Activated T-helper 1 cell treated with anti-CD3 and anti-CD28 coated beads, Interleukin-12 subunit alpha, Interleukin-12 subunit beta, Interleukin-2, Interleukin-4 antibody, amounts not matched to agents 30 ng/mL and 10 ng/mL and 1 ng/mL, durations not matched to agents 14 hours and 24 hours and 36 hours (primary cell): ENCODE measurements at regions of chr4 and their contacts with region 1.

Region 1: DNA sequence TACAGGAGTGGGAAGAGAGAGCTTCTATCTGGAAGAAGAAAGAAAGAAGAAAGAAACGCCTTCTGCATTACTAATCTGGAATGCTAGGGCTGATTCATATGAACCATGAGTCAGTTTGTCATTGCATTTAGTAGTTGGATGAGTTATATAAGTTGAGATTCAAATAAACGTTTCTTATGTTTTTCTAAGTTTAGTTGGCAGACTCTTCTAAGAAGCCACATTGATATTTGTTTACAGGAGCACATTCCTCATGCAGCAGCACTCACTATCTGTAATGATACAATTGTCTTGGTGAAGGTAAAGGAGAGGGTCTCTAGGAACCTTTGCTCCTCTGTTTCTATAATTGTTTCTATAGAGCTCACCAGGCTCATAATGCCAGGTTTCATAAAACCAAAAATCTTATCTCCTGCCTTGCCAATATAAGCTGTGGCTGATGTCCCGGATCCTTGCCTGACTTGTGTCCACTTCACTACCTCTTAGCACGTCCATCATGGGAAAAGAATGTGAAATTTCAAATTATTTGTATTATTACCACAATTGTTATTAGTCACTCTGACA is 39.5 kb downstream of the HOPX start:
- DNase-seq: no peak
- H3K4me3 Mint-ChIP-seq: no peak overlapping the region
- H3K27ac Mint-ChIP-seq: peak overlapping the region; percentile 82
- H3K4me1 Mint-ChIP-seq: peaks cover 40% of the 10 kb centered on the region
- H3K27me3 Mint-ChIP-seq: peaks cover 3% of the 10 kb centered on the region

Region 2: DNA sequence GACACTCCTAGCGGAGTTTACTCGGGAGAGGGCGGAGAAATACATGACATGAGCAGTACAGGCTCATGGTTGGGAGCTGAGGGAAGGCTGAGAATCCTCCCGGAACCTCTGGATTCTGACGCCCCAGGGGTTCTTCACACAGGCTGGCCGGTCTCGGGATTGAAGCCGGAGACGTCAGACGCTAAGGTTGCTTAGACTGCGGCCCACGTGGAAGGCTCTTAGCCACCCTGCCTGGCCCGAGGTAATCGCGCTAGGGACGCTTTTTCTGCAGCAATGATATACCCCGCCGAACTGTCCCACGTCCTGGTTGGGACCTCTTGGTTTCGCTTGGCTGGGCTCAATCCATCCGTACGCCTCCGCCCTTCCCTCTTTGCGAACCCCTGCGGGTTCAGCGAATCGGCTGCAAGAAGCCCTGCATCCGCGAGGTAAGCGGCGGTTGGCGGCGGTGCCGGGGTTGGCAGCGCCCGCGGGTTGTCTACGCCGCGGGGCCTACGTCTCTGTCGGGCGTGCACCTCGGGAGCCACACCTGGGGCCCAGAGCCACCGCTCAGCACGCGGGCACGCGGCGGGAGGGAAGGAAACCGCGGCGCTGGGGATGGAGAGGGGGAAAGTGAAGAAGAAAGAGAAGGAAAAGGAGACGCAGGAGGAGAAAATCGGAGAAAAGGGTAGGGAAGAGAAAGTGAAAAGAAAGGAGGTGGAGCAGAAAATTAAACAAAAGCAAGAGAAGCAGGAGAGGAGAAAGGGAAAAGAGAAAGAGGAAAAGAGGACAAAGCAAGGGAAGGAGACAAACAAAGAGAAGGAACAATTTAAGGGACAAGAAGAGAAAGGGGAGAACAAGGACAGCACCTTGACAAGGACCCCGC is 136.1 kb before region 1 on chr4 and contains the start of gene ARL9:
- intact Hi-C with region 1: no loop called
- DNase-seq: peak; percentile 38
- H3K4me3 Mint-ChIP-seq: peak within 1 kb of the TSS; percentile 88
- H3K27ac Mint-ChIP-seq: peak within 1 kb of the TSS; percentile 76
- H3K4me1 Mint-ChIP-seq: peaks cover 20% of the 10 kb centered on the region
- H3K27me3 Mint-ChIP-seq: peaks cover 13% of the 10 kb centered on the region
- total RNA-seq, gene ARL9: 0.13 and 0.32 TPM in 2 replicates

Region 3: DNA sequence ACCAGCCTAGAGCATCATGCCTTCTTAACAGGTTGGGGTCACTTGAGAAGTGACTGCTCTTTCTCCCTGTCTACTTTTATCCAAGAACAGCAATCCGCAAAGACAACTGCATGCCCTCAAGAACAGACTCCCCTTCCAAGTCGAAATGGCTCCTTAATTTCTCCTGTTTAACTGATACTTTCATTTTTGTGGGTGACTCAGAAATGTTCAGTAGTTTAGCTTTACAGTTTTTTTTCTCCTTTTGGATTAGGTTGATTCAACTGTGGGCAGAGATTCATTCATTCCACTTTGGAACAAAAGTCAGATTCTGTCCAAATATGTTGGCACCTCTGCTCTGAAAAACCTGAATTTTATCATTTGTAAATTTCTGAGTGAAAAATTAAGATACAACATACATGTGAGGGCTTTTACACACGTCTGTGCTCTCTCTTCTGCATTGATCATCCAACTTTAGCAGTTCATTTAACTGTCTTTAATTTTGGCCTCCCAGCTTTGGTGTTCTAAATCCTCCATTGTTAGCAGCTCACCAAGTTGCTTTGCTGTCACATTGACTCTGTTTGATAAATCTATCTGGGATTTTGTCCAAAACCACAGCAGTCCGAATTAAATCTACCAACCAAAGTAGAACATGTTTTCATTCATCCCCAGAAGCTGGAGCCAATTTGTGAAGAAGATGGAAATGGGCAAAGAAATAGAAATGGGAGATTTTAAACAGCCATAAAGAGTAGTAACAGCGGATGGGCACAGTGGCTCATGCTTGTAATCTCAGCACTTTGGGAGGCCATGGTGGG is 10.5 kb before region 1 on chr4:
- intact Hi-C with region 1: loop called (anchors 1 kb)
- DNase-seq: no peak
- H3K4me3 Mint-ChIP-seq: no peak overlapping the region
- H3K27ac Mint-ChIP-seq: no peak overlapping the region
- H3K4me1 Mint-ChIP-seq: peaks cover 28% of the 10 kb centered on the region
- H3K27me3 Mint-ChIP-seq: peaks cover 1% of the 10 kb centered on the region